ENCODE measurements at regions of chr1 and their contacts with region 1.

Region 1: DNA sequence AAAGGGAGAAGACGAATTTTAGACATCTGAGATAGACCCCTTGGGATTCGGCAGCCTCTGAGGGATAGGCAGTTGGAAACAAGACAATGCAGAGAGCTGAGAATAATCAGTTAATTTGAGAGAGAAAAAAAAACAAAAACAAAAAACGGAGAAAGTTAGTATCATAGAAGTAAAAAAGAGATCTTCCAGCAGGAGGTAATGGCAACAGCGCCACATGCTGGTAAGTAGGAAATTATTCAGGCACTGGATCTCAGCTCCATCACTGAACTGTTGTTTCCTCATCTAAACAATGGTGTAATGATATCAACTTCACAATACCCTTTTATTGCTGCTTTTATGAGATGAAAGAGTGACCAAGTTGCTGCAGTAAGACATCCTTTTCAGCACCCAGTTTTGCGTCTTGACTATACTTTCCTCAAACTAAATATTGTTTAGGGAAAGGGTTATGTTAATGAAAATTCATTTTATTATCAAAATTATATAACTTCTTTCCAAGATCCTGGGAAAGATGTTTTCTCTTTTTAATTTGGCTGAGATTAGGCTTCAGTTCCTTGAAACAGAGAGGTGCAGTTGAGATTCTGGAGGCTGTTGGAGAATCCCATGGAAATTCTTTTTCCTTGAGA is 91.4 kb upstream of the KCNA3 start:
- DNase-seq: peak; percentile 56
- H3K27ac ChIP-seq: no peak overlapping the region
- CTCF ChIP-seq: peak; percentile 82

Region 2: GRCh38 chr1:110619412-110620249 is 146.5 kb before region 1 on chr1:
- CTCF ChIA-PET with region 1: interaction called, 22 read pairs
- POLR2A ChIA-PET with region 1: no interaction called
- DNase-seq: peak; percentile 78
- H3K27ac ChIP-seq: no peak overlapping the region
- CTCF ChIP-seq: peak; percentile 81